ENCODE measurements at regions of chr10 and their contacts with region 1.

Region 1: DNA sequence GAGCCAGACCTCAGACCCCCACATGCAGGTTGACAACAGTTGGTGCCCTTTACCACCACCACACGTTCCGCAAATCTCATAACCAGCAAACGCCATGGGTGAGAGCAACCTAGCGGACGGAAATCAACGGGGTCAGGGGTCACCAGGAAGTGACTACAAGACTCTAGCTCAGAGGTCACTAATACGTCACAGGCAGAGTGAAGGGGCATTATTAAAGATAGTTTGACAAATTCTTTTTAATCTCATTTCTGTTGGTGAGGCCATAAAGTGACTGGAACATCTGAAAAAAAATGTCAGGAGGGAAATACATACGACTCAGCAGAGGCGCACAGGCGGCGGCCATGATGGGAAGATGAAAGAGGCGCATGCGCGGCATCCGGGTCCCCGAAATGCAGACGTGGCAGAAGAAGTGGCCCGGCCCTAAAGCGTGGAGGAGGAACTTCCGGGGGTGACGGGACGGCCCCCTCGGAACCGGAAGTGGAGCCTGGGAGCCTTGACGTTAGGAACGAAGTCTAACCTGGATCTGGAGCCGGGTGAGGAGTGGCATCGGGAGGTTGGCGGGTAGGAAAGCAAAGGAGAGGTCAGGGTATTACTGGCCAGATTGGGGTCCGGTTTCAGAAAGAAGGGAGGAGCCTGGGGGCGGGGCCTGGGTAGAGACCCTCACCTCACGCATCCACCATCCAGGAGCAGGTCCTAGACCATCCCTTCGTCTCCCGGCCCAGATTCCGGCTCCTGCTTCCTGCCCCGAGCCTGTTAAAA is at the start of gene SEC24C:
- H3K4me3 ChIP-seq: peak within 1 kb of the TSS; percentile 97
- H3K27ac ChIP-seq: peak within 1 kb of the TSS; percentile 63
- H3K4me1 ChIP-seq: no peaks in the 10 kb centered on the region
- CTCF ChIP-seq: peak; percentile 58; the same call in 1 of the 2 replicates

Region 2: DNA sequence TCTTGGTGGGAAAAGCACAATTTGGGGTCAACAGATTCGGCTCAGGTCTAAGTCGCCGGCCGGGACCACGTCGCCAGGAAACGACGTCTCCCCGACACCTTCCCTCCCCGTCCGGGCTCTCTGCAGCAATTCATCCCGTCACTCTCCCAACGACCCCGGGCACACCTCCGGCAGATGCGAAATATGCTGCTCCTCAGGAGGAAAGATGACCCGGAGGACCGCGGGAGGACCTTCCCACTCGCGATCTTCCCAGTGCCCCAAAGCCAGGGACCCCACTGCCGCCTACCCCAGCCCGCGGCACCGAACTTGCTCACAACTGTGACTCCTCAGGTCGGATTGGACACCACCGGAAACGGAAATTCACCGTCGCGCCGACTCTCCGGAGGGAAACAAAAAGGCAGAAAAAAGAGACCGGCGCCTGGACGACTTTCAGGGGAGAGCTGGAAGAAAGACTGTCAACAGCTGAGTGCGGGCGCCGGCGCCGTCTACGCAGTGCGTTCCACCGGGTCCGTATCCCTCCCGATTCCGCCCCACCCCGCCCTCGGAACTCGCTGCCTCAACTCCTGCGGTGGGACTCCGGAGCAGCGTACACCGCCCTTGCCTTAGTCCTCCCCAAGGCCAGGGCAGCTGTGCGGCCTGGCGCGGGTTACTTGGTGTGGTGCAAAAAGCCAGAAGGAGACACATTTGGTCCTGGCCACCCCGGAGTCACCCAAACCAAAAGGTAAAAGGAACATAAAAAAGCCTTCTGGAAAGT is 13.8 kb before region 1 on chr10:
- CTCF ChIA-PET with region 1: no interaction called
- POLR2A ChIA-PET with region 1: interaction called, 48 read pairs
- H3K4me3 ChIP-seq: peak overlapping the region; percentile 99
- H3K27ac ChIP-seq: peak overlapping the region; percentile 48
- H3K4me1 ChIP-seq: no peaks in the 10 kb centered on the region
- CTCF ChIP-seq: no peak

Region 3: DNA sequence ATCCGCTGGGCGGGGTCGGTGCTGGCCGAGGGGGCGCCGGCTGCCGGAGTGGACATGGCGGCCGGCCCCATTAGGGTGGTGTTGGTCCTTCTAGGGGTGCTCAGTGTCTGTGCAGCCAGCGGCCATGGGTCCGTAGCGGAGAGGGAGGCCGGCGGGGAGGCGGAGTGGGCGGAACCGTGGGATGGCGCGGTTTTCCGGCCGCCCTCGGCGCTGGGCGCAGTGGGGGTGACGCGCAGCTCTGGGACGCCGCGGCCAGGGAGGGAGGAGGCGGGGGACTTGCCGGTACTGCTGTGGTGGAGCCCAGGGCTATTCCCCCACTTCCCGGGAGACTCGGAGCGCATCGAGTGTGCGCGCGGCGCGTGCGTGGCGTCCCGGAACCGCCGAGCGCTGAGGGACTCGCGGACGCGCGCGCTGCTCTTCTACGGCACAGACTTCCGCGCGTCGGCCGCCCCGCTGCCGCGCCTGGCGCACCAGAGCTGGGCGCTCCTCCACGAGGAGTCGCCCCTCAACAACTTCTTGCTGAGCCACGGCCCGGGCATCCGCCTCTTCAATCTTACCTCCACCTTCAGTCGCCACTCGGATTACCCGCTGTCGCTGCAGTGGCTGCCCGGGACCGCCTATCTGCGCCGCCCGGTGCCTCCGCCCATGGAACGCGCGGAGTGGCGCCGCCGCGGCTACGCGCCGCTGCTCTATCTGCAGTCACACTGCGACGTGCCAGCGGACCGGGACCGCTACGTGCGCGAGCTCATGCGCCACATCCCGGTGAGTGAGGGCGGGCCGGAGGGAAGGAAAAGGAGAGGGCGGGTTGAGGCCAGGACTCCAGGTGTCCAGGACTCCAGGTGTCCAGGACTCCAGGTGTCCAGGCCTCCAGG is 28.4 kb after region 1 on chr10:
- CTCF ChIA-PET with region 1: no interaction called
- POLR2A ChIA-PET with region 1: interaction called, 18 read pairs
- H3K4me3 ChIP-seq: peak overlapping the region; percentile 75
- H3K27ac ChIP-seq: peak overlapping the region; percentile 75
- H3K4me1 ChIP-seq: peaks cover 4% of the 10 kb centered on the region; the same call in 1 of the 2 replicates
- CTCF ChIP-seq: peak; percentile 88

Region 4: GRCh38 chr10:73785221-73785720 is 41.2 kb after region 1 on chr10 and contains the start of gene ZSWIM8:
- CTCF ChIA-PET with region 1: no interaction called
- POLR2A ChIA-PET with region 1: interaction called, 10 read pairs
- H3K4me3 ChIP-seq: peak within 1 kb of the TSS; percentile 93
- H3K27ac ChIP-seq: peak within 1 kb of the TSS; percentile 74
- H3K4me1 ChIP-seq: peaks cover 8% of the 10 kb centered on the region; the same call in 1 of the 2 replicates
- CTCF ChIP-seq: no peak; the same call in 1 of the 2 replicates

Measured in HEK293 (cell line).